Gastrocnemius medialis (tissue), 4 donors: ENCODE measurements at regions of chr16 and their contacts with region 1.

Region 1: GRCh38 chr16:56931892-56932720 is at the start of gene HERPUD1:
- DNase-seq: peak; percentile 98 to 99
- ATAC-seq: peak; percentile 77 to 83
- H3K4me3 ChIP-seq: peak within 1 kb of the TSS; percentile 84 to 99 (median 93)
- H3K27ac ChIP-seq: peak within 1 kb of the TSS; percentile 96 to 100 (median 98)
- H3K4me1 ChIP-seq: peaks cover 30 to 38% of the 10 kb centered on the region in 2 donors
- H3K27me3 ChIP-seq: no peaks in the 10 kb centered on the region
- CTCF ChIP-seq: peak in 2 of 5 experiments; percentile 10 to 25
- POLR2A ChIP-seq: peak; percentile 95 to 100
- total RNA-seq, gene HERPUD1: 110 to 281 (median 125) TPM

Region 2: DNA sequence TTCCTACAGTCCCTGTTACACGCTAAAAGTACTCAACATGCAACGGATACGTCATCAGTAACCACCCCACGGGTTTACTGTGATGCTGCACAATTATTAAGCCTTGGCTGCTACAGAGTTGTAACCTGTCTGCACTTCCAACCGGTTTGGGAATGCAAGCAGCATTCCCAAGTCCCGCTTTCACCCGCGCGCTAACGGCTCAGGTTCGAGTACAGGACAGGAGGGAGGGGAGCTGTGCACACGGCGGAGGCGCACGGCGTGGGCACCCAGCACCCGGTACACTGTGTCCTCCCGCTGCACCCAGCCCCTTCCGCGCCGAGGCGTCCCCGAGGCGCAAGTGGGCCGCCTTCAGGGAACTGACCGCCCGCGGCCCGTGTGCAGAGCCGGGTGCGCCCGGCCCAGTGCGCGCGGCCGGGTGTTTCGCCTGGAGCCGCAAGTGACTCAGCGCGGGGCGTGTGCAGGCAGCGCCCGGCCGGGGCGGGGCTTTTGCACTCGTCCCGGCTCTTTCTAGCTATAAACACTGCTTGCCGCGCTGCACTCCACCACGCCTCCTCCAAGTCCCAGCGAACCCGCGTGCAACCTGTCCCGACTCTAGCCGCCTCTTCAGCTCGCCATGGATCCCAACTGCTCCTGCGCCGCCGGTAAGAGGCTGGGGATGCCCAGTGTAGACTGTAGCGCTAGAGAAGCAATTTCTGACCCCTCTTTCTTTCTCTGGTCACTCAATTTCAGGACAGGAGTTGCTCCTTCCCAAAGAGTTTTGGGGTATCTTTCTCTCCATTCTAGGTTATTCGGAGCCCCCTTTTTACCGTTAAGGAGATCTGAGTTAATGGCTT is 323.8 kb before region 1 on chr16 and contains the start of gene MT2A:
- in situ Hi-C with region 1: no loop called
- intact Hi-C with region 1: loop called (anchors 1 kb)
- DNase-seq: peak; percentile 94 to 97
- ATAC-seq: peak; percentile 18 to 19
- H3K4me3 ChIP-seq: peak within 1 kb of the TSS; percentile 60 to 75 (median 70)
- H3K27ac ChIP-seq: peak within 1 kb of the TSS; percentile 95 to 99 (median 98)
- H3K4me1 ChIP-seq: peaks cover 71 to 83% of the 10 kb centered on the region in 2 donors
- H3K27me3 ChIP-seq: no peaks in the 10 kb centered on the region
- CTCF ChIP-seq: peak in 1 of 5 experiments; percentile 11
- POLR2A ChIP-seq: peak in 1 of 2 donors; percentile 99
- total RNA-seq, gene MT2A: 250 to 1,131 (median 795) TPM

Region 3: DNA sequence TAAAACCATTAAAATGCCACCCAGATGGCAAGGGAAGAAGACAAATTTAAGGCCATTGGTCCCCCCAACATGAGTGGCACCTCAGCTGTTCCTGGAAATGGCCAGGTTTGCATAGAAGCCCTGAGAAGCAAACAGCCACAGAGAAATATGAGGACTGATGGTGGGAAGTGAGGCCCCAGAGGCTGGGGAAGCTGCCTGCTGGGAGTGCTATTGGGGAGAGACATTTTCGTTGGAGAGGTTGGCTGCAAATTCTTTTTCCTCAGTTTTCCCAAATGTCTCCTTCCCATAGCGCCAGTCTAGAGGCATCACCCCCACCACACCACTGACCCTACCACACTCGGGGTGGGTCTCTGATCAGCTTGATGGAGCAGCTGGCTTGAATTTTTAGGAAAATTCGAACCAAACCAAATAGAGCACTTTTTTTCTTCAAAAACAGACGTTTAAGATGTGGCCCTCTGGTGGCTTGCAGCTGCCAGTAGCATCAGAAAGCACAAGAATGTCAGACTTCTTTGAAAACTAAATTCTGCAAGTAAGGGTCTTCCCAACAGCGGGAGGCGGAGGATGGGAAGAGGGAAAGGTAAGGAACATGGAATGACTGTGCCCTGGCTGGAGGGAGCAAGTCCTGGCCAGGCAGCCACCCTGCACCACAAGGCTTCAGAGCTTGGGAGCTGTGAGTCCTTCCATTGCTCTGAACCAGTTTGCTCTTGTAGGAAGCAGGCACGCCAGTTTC is 80.3 kb before region 1 on chr16:
- in situ Hi-C with region 1: no loop called
- intact Hi-C with region 1: no loop called
- DNase-seq: no peak
- ATAC-seq: no peak
- H3K4me3 ChIP-seq: no peak overlapping the region
- H3K27ac ChIP-seq: no peak overlapping the region
- H3K4me1 ChIP-seq: peaks cover 5 to 9% of the 10 kb centered on the region in 2 donors
- H3K27me3 ChIP-seq: no peaks in the 10 kb centered on the region
- CTCF ChIP-seq: no peak
- POLR2A ChIP-seq: no peak

Region 4: DNA sequence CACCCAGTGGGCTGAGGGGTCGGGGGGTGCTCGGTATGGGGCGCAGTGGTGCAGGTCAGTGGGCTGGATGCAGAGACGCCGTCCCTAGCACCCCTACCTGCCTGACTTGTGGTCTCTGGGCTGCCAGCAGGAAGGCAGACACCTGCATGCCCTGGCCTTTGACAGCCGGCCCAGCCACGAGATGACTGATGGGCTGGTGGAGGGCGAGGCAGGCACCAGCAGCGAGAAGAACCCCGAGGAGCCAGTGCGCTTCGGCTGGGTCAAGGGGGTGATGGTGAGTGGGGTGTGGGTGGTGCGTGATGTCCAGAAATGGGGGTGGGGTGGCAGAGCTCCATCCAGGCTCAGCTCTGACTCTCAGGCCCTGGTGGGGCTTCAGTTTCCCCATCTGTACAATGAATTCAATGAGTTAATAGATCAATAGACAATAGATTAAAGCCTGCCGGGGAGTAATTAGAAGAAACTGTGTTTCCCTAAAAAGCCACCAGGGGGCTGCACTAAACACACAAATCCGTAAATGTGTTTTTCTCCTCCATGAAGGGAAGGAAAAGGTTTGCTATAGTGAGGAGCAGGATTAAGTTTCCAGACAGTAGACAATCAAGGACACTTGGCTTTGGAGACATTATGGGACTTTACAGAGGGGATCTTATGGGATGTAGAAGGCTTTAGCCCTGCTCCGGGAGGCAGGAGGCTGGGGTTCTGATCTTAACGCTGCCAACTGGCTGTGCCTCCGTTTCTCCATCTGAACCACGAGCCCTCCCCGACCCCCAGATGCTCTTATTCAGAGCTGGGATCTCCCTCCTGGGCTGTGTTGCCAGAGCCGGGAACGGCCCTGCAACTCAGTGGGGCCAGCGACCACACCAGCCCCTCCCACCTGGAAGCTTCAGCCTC is 64.9 kb before region 1 on chr16:
- in situ Hi-C with region 1: no loop called
- intact Hi-C with region 1: loop called (anchors 5 kb)
- DNase-seq: no peak
- ATAC-seq: peak; percentile 59 to 74
- H3K4me3 ChIP-seq: no peak overlapping the region
- H3K27ac ChIP-seq: peak overlapping the region in 1 of 4 donors; percentile 14
- H3K4me1 ChIP-seq: peaks cover 5 to 6% of the 10 kb centered on the region in 2 donors
- H3K27me3 ChIP-seq: no peaks in the 10 kb centered on the region
- CTCF ChIP-seq: peak; percentile 69 to 74 (median 72)
- POLR2A ChIP-seq: no peak

Region 5: DNA sequence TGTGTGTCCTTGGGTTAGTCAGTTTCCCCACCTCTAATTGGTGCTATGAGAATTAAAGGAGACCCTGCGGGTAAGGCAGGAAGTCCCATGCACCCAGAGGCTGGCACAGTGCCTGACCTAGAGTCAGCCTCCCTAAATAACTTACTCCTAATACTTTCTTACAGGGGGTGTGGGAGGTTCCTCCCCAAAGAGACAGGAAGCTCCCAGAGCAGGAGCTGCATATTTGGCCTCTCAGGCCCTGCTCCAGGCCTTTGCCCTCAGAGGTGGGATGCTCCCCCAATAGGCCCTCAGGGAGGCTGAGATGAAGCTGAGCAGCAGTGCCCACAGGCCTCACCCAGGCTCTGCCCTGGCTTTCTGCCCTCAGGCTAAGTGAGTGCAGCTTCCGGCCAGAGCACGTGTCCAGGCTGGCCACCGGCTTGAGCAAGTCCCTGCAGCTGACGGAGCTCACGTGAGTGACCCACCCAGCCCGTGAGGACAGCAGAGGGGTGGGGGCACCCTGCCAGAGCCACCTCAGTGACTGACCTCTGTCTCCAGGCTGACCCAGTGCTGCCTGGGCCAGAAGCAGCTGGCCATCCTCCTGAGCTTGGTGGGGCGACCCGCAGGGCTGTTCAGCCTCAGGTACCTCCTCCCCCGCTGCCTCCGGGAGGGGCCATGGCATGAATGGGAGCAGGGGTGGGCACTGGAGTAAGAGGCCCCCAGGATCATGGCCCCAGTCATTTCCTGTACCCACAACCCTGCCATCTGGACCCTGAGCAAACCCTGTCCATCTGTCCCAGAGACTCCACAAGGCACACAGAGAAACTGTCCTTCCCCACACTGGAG is 129.2 kb after region 1 on chr16:
- in situ Hi-C with region 1: no loop called
- intact Hi-C with region 1: loop called (anchors 2 kb)
- DNase-seq: peak; percentile 85 to 97
- ATAC-seq: peak; percentile 89 to 94
- H3K4me3 ChIP-seq: peak overlapping the region in 3 of 4 donors; percentile 11 to 32 (median 23)
- H3K27ac ChIP-seq: peak overlapping the region; percentile 83 to 89 (median 85)
- H3K4me1 ChIP-seq: peaks cover 17 to 20% of the 10 kb centered on the region in 2 donors
- H3K27me3 ChIP-seq: no peaks in the 10 kb centered on the region
- CTCF ChIP-seq: peak in 1 of 5 experiments; percentile 27
- POLR2A ChIP-seq: peak; percentile 48 to 69

Region 6: DNA sequence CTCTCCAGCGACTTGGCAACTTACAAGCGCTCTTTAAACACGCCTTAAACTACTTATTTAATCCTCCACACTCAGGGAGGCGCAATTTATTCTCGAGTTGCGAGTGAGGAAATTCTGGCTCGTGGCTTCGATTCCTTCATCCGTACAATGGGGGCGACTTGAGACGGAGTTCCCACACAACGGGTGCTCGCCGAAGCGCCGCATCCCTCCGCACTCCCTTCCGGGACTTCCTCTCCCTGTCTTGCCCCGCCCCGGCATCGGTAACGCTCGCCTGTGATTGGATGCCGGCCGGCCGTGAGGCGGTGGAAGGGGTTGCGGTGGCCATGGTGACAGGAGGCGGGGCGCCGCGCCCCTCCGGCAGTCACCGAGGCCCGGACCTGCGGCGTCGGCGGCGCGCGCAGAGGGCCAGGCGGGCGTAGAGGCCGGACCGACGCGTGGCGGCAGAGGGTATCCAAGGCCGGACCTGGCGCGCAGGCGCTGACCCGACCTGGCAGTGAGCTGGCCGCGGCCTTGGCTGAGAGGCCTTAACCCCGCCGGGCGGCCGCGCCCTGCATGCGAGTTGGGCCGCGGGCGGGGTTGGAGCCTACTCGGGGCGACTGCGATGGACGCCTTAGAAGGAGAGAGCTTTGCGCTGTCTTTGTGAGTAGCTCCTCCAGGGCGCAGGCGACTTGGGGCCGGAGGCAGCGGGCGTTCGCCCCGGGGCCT is 312.8 kb after region 1 on chr16 and contains the start of gene ARL2BP:
- in situ Hi-C with region 1: no loop called
- intact Hi-C with region 1: loop called (anchors 5 kb)
- DNase-seq: peak; percentile 96 to 98
- ATAC-seq: peak; percentile 92 to 93
- H3K4me3 ChIP-seq: peak within 1 kb of the TSS; percentile 75 to 97 (median 87)
- H3K27ac ChIP-seq: peak within 1 kb of the TSS; percentile 91 to 99 (median 94)
- H3K4me1 ChIP-seq: peaks cover 8 to 12% of the 10 kb centered on the region in 2 donors
- H3K27me3 ChIP-seq: no peaks in the 10 kb centered on the region
- CTCF ChIP-seq: no peak
- POLR2A ChIP-seq: peak; percentile 69 to 79
- total RNA-seq, gene ARL2BP: 25.5 to 52.6 (median 44.5) TPM